PC-3 (cell line): ENCODE measurements at regions of chr3 and their contacts with region 1.

Region 1: GRCh38 chr3:58188173-58188564 is 22.6 kb downstream of the DNASE1L3 start:
- DNase-seq: peak; percentile 84
- ATAC-seq: peak; percentile 72
- H3K4me3 ChIP-seq: no peak overlapping the region
- H3K27ac ChIP-seq: peak overlapping the region; percentile 77
- H3K4me1 ChIP-seq: peaks cover 23% of the 10 kb centered on the region
- H3K27me3 ChIP-seq: no peaks in the 10 kb centered on the region
- CTCF ChIP-seq: no peak

Region 2: DNA sequence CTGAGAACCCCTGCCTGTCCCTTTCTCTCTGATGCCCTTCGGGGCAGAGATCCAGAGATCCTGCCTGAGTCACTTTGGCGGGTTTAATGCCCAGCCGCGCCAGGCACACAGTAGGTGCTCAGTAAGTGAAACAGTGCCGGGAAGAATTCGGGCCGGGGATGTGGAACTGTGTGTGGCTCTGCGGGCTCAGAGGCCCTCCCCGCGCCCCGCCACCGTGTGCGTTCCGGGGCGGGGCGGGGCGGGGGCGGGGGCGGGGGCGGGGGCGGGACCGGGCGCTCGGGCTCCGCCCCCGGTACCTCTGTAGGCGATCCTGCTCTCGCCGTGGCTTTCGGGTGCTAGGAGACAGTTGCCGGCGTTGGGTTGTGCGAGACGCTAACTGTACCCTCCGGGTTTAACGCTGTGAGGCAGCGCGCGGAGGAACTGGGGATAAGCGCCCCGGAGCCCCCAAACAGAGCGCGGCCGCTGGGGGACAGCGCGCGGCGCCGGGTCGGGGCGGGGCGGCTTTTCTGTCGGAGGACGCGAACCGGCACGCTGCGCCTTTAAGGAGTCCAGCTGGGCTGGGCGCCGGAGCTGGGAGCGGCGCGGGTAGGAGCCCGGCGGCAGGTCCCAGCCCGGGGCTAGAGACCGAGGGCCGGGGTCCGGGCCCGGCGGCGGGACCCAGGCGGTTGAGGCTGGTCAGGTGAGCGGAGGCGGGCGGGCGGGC is 49.2 kb after region 1 on chr3 and contains the start of gene ABHD6:
- CTCF ChIA-PET with region 1: interaction called, 3 read pairs
- POLR2A ChIA-PET with region 1: no interaction called
- intact Hi-C with region 1: loop called (anchors 5 kb)
- DNase-seq: peak; percentile 66
- ATAC-seq: peak; percentile 72
- H3K4me3 ChIP-seq: peak within 1 kb of the TSS; percentile 99
- H3K27ac ChIP-seq: peak within 1 kb of the TSS; percentile 40
- H3K4me1 ChIP-seq: peaks cover 32% of the 10 kb centered on the region
- H3K27me3 ChIP-seq: no peaks in the 10 kb centered on the region
- CTCF ChIP-seq: peak; percentile 46; the same call in 1 of the 2 replicates
- total RNA-seq, gene ABHD6: 11.6 and 13.4 TPM in 2 replicates

Region 3: GRCh38 chr3:58305882-58306711 is 117.9 kb after region 1 on chr3 and contains the starts of genes HTD2 and RPP14:
- CTCF ChIA-PET with region 1: interaction called, 35 read pairs
- POLR2A ChIA-PET with region 1: no interaction called
- intact Hi-C with region 1: no loop called
- DNase-seq: peak; percentile 99
- ATAC-seq: peak; percentile 92
- H3K4me3 ChIP-seq: peak within 1 kb of the TSS; percentile 95
- H3K27ac ChIP-seq: peak within 1 kb of the TSS; percentile 75
- H3K4me1 ChIP-seq: peaks cover 11% of the 10 kb centered on the region
- H3K27me3 ChIP-seq: no peaks in the 10 kb centered on the region
- CTCF ChIP-seq: peak; percentile 90
- total RNA-seq, gene HTD2: 4.9 and 6.9 TPM in 2 replicates
- total RNA-seq, gene RPP14: 28.8 and 30.0 TPM in 2 replicates